A549 (cell line): ENCODE measurements at regions of chr5 and their contacts with region 1.

Region 1: GRCh38 chr5:149367249-149367971 is 9.6 kb downstream of the PCYOX1L start:
- DNase-seq: peak; percentile 82 to 96
- ATAC-seq: peak; percentile 71 to 91
- H3K4me3 ChIP-seq: no peak overlapping the region
- H3K27ac ChIP-seq: no peak overlapping the region
- H3K4me1 ChIP-seq: peaks cover 4% of the 10 kb centered on the region; the same call in 1 of the 3 replicates
- CTCF ChIP-seq: peak; percentile 84
- EP300 ChIP-seq: no peak
- POLR2A ChIP-seq: no peak
- RAD21 ChIP-seq: peak; percentile 69 to 79

Region 2: GRCh38 chr5:149079883-149080282 is 287.5 kb before region 1 on chr5:
- CTCF ChIA-PET with region 1: no interaction called
- POLR2A ChIA-PET with region 1: no interaction called
- DNase-seq: no peak
- ATAC-seq: no peak
- H3K4me3 ChIP-seq: no peak overlapping the region
- H3K27ac ChIP-seq: no peak overlapping the region
- H3K4me1 ChIP-seq: no peaks in the 10 kb centered on the region
- CTCF ChIP-seq: no peak
- EP300 ChIP-seq: no peak
- POLR2A ChIP-seq: no peak
- RAD21 ChIP-seq: no peak

Region 3: DNA sequence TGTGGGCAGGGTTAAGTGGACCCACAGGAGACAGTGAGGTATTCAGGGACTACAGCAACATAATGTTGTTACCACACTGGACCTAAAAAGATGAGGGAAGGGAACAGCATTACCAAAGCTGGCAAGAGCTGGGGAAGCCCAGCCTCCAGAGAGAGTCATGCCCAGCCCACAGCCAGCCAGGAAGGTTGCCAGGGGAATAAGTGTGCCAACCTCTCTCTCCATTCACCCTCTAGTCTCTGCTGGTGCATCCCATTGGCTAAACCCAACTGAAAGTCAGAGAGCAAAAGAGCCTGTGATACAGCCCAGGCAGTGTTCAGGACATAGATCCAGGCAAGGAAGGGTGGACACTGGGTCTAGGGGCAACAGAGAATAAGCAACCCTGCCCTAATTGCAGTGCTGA is 131.6 kb before region 1 on chr5:
- CTCF ChIA-PET with region 1: no interaction called
- POLR2A ChIA-PET with region 1: no interaction called
- DNase-seq: no peak
- ATAC-seq: no peak
- H3K4me3 ChIP-seq: no peak overlapping the region
- H3K27ac ChIP-seq: no peak overlapping the region
- H3K4me1 ChIP-seq: no peaks in the 10 kb centered on the region
- CTCF ChIP-seq: no peak
- EP300 ChIP-seq: no peak
- POLR2A ChIP-seq: no peak
- RAD21 ChIP-seq: no peak

Region 4: DNA sequence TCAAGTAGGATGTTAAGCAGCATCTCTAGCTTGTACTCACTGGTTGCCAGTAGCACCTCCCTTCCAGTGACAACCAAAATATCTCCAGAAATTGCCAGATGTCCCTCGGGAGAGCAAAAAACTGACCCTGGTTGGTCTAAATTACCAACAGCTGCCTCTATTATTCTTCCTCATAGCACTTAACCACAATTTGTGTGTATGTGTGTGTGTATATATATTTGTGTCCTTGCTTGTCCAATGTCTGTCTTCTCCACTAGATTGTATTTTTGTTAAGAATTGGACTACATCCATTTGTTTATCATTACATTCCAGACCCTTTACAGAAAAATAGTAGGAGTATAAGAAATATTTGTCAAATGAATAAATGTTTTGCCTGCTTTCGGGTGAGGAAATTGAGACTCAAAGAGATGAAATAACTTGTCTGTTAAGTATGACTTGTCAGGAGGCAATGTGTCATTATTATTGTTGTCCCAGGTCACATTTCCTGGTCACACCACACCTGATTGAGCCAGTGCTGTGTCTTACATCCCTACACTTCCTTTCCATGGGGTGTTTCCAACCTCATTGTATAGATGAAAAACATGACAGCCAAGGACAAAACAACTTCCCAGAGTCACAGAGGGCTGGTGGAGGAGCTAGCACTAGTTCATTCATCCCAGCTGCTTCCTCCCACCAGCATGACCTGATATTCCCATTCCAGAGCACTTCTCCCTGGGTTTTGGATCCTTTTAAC is 33.5 kb before region 1 on chr5:
- CTCF ChIA-PET with region 1: interaction called, 10 read pairs
- POLR2A ChIA-PET with region 1: no interaction called
- DNase-seq: no peak
- ATAC-seq: no peak
- H3K4me3 ChIP-seq: no peak overlapping the region
- H3K27ac ChIP-seq: no peak overlapping the region
- H3K4me1 ChIP-seq: peaks cover 11% of the 10 kb centered on the region
- CTCF ChIP-seq: no peak
- EP300 ChIP-seq: no peak
- POLR2A ChIP-seq: no peak
- RAD21 ChIP-seq: no peak

Region 5: GRCh38 chr5:149345147-149345875 is 22.1 kb before region 1 on chr5 and contains the start of gene GRPEL2:
- CTCF ChIA-PET with region 1: interaction called, 158 read pairs
- POLR2A ChIA-PET with region 1: interaction called, 4 read pairs
- DNase-seq: peak; percentile 98 to 99
- ATAC-seq: peak; percentile 99 to 100
- H3K4me3 ChIP-seq: peak within 1 kb of the TSS; percentile 94
- H3K27ac ChIP-seq: peak within 1 kb of the TSS; percentile 89 to 93
- H3K4me1 ChIP-seq: peaks cover 23% of the 10 kb centered on the region
- CTCF ChIP-seq: peak; percentile 8; the same call in 1 of the 3 replicates
- EP300 ChIP-seq: no peak
- POLR2A ChIP-seq: peak; percentile 82
- RAD21 ChIP-seq: no peak
- polyA plus RNA-seq, gene GRPEL2: 17.0 and 26.4 TPM in 2 replicates

Region 6: DNA sequence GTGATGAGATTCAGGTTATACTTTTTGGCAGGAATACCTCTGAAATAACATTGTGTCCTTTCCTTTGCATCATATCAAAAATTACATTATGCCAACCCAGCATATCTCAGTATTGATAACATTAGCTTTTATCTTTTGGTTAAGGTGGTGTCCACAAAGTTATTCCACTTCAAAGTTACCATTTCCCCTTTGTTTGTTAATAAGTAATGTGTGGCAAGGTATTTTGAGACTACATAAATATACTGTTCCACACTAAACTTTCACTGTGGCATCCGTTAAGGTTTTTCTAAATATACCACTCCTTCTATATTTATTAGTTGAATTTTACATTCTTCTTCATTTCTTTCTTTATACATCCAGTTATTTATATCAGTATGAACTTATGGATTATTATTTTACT is 199.8 kb after region 1 on chr5:
- CTCF ChIA-PET with region 1: interaction called, 29 read pairs
- POLR2A ChIA-PET with region 1: no interaction called
- DNase-seq: no peak
- ATAC-seq: no peak
- H3K4me3 ChIP-seq: no peak overlapping the region
- H3K27ac ChIP-seq: no peak overlapping the region
- H3K4me1 ChIP-seq: peaks cover 19% of the 10 kb centered on the region
- CTCF ChIP-seq: no peak
- EP300 ChIP-seq: no peak
- POLR2A ChIP-seq: no peak
- RAD21 ChIP-seq: no peak